BJ (cell line): ENCODE measurements at regions of chr21 and their contacts with region 1.

Region 1: GRCh38 chr21:33878824-33879223 is 36.8 kb downstream of the ATP5PO start:
- DNase-seq: no peak
- H3K4me3 ChIP-seq: no peak overlapping the region
- H3K27me3 ChIP-seq: peaks cover 2% of the 10 kb centered on the region; the same call in 1 of the 2 replicates
- CTCF ChIP-seq: no peak

Region 2: DNA sequence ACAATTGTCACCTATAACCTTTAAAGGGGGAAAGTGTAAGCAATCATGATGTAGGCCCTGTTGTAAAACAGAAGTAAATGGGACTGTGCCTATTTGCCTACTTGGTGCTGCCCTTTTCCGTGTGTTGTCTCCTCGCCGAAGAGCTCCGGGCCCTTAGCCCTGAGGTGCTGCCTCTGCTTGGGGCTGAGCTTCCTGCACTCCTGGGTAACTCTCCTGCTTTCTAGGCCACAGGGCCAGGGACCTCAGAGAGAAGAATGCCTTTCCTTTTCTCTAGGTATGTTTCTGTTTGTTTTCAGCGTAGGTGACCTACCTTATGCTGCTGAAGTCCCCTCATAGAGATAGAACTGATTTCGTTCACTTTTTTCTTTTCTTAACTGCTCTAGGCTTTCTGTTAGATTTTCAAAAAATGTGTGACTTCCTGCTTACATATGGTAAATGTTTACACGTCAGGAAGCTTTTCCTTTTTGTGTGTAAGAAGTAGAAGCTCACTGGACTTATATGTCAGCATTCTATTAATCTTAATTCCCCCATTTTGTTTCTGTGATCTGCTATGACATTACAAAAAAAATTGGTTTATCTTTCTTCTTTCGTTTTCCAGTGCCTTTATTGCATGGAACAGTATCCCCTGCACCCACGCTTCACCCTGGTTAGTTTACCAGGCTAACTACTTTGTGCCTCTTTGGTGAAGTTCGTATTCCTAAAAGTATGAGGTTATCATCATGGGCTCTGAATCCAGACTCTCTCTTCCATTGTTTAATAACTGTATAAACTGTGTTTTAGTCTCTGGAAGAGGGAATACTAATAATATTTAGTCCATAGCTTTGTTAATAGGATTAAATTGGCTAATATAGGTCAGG is 174.8 kb before region 1 on chr21:
- CTCF ChIA-PET with region 1: no interaction called
- POLR2A ChIA-PET with region 1: no interaction called
- DNase-seq: no peak
- H3K4me3 ChIP-seq: no peak overlapping the region
- H3K27me3 ChIP-seq: no peaks in the 10 kb centered on the region
- CTCF ChIP-seq: no peak

Region 3: DNA sequence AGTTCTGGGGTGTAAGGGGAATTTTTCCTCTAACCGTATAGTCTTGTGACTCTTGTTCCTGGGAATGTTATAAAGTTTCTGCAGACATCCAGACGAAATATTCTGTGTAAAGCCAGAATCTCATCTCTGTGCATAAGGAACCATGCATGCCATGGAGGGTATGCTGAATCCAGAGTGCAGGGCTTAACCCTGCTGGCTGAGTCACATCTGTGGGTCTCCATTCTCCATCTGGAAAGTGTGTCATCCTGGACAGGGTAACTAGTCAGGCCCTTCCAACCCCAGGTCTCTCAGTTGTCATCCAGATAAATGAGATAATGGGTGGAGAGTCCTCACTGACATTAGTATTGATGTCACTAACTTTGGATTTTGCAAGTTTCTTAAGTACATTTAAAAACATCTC is 12.0 kb before region 1 on chr21:
- CTCF ChIA-PET with region 1: interaction called, 3 read pairs
- POLR2A ChIA-PET with region 1: interaction called, 16 read pairs
- DNase-seq: no peak
- H3K4me3 ChIP-seq: no peak overlapping the region
- H3K27me3 ChIP-seq: peaks cover 4% of the 10 kb centered on the region; the same call in 1 of the 2 replicates
- CTCF ChIP-seq: no peak